ENCODE measurements at regions of chr12 and their contacts with region 1.

Region 1: DNA sequence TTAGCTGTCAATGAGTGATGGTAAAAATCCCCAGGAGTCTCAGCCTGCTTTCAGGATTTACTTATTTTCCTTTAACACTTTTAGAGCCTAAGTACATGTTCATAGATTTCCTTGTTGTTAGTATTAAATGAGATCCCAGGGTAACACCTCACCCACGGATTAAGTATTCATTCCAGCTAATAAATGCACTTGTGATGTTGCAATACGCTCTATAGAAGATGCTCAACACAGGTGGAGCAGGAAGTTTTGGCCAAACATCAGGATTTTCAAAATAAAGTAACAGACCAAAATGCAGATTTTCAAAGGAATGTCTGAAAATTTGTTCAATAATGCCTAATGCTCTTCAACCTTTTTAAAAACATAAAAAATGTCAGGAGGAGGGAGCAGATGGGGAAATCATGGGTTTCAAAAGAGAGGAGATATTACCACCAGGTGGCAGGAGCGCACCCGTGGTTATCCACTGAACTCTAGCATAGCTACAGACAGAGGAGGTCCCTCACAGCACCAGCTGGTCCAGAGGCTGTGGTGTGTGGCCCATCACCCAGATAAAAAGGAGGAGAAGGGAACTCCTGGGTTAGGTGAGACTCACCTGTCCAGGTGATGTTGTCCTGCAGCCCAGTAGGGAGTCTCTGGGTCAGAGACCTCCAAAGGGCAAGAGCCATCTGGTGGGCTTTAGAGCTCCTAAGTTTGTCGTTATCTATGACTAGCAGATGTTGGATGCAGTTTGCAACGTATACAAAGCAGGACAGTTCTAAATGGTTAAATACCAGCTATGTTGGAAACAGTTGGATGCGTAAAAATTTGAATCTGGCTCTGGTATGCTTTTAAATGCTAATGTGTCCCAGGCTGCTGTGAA is 1158.4 kb upstream of the TMEM132C start:
- DNase-seq: peak; percentile 35
- ATAC-seq: peak; percentile 89
- H3K4me3 ChIP-seq: no peak overlapping the region
- H3K27ac ChIP-seq: no peak overlapping the region
- H3K4me1 ChIP-seq: peaks cover 22 to 23% of the 10 kb centered on the region in 2 experiments
- H3K27me3 ChIP-seq: no peaks in the 10 kb centered on the region
- CTCF ChIP-seq: peak; percentile 65 to 76 (median 74); a peak in 5 of 6 replicates
- POLR2A ChIP-seq: no peak
- RAD21 ChIP-seq: peak; percentile 83

Region 2: GRCh38 chr12:127119600-127120140 is 11.1 kb after region 1 on chr12:
- CTCF ChIA-PET with region 1: interaction called, 13 read pairs
- POLR2A ChIA-PET with region 1: no interaction called
- RAD21 ChIA-PET with region 1: no interaction called
- intact Hi-C with region 1: no loop called
- DNase-seq: no peak
- ATAC-seq: no peak
- H3K4me3 ChIP-seq: no peak overlapping the region
- H3K27ac ChIP-seq: no peak overlapping the region
- H3K4me1 ChIP-seq: peaks cover 12 to 16% of the 10 kb centered on the region in 2 experiments
- H3K27me3 ChIP-seq: no peaks in the 10 kb centered on the region
- CTCF ChIP-seq: no peak
- POLR2A ChIP-seq: no peak
- RAD21 ChIP-seq: no peak

Region 3: GRCh38 chr12:127257366-127257935 is 148.9 kb after region 1 on chr12:
- CTCF ChIA-PET with region 1: no interaction called
- POLR2A ChIA-PET with region 1: no interaction called
- RAD21 ChIA-PET with region 1: no interaction called
- intact Hi-C with region 1: no loop called
- DNase-seq: no peak
- ATAC-seq: no peak
- H3K4me3 ChIP-seq: no peak overlapping the region
- H3K27ac ChIP-seq: no peak overlapping the region
- H3K4me1 ChIP-seq: no peaks in the 10 kb centered on the region
- H3K27me3 ChIP-seq: peaks cover 5% of the 10 kb centered on the region; the same call in 1 of the 2 replicates
- CTCF ChIP-seq: no peak
- POLR2A ChIP-seq: no peak
- RAD21 ChIP-seq: no peak

Region 4: DNA sequence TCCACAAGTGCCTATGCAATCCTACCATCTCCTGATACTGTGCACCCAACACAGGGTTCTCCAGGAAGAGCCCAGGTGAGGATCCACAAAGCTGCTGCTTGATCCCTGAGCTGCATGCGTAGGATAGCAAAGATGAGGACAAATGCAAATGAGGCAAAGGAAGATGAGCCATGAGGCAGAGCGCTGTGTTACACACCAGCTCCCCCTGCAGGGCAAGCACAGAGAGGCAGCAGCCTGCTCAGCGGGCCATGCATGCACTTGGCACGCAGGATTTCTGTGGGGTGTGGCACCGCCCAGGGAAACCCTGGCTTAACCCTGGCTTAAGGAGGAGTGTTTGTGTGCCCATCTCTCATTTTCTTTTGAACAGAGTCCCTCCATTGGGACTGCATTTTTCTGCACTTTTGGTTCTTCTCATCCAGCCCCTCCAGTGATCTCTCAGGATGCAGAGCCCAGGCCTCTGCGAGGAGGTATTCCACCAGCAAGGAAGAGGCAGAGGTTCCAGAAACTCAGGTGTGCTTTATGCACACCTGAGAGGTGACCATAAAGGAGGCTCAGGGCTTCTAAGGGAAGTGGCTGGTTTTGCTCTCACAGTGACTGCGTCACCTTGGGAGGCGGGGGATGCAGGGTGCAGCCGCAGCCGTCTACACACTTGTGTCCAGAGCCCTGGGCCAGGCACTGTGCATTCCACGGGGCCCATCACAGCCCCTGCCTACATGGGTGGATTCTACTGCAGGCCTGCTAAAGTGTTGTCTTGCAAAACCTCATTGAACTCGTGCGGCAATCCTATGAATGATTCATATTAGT is 185.1 kb after region 1 on chr12:
- CTCF ChIA-PET with region 1: interaction called, 28 read pairs
- POLR2A ChIA-PET with region 1: no interaction called
- RAD21 ChIA-PET with region 1: interaction called, 3 to 6 read pairs
- intact Hi-C with region 1: loop called (anchors 1 kb)
- DNase-seq: peak; percentile 50
- ATAC-seq: peak; percentile 98
- H3K4me3 ChIP-seq: no peak overlapping the region
- H3K27ac ChIP-seq: no peak overlapping the region
- H3K4me1 ChIP-seq: no peaks in the 10 kb centered on the region
- H3K27me3 ChIP-seq: no peaks in the 10 kb centered on the region
- CTCF ChIP-seq: peak; percentile 81 to 95 (median 95)
- POLR2A ChIP-seq: no peak
- RAD21 ChIP-seq: peak; percentile 92

Region 5: DNA sequence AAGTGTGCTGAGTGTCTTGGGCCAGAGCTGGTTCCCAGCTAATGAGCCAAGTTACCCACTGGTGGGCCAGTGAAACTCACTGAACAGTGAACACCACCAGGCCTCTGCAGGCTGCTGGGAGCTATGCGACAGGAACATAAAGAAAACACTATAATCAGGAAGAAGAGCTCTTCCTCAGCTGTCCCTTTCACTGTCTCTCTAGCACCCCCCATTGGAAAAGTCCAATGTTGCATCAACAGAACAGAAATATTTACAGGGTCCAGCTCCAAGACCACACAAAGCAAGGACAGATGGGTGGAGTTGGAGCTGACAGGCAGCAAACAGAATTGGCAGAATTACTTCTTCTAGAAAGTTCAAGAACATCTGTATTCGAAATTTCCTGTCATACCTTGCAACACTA is 254.8 kb after region 1 on chr12:
- CTCF ChIA-PET with region 1: interaction called, 14 read pairs
- POLR2A ChIA-PET with region 1: no interaction called
- RAD21 ChIA-PET with region 1: interaction called in 1 of 2 experiments, 3 read pairs
- intact Hi-C with region 1: loop called (anchors 5 kb)
- DNase-seq: peak; percentile 22
- ATAC-seq: peak; percentile 75
- H3K4me3 ChIP-seq: no peak overlapping the region
- H3K27ac ChIP-seq: no peak overlapping the region
- H3K4me1 ChIP-seq: no peaks in the 10 kb centered on the region
- H3K27me3 ChIP-seq: no peaks in the 10 kb centered on the region
- CTCF ChIP-seq: peak; percentile 23 to 60 (median 54); a peak in 5 of 6 replicates
- POLR2A ChIP-seq: no peak
- RAD21 ChIP-seq: peak; percentile 63

Region 6: GRCh38 chr12:127861406-127861805 is 752.8 kb after region 1 on chr12:
- CTCF ChIA-PET with region 1: no interaction called
- POLR2A ChIA-PET with region 1: no interaction called
- RAD21 ChIA-PET with region 1: no interaction called
- intact Hi-C with region 1: no loop called
- DNase-seq: no peak
- ATAC-seq: no peak
- H3K4me3 ChIP-seq: no peak overlapping the region
- H3K27ac ChIP-seq: no peak overlapping the region
- H3K4me1 ChIP-seq: no peaks in the 10 kb centered on the region
- H3K27me3 ChIP-seq: no peaks in the 10 kb centered on the region
- CTCF ChIP-seq: no peak
- POLR2A ChIP-seq: no peak
- RAD21 ChIP-seq: no peak

Measured in HCT116 (cell line).